Esophagus squamous epithelium (tissue), 5 donors: ENCODE measurements at regions of chr1 and their contacts with region 1.

Region 1: DNA sequence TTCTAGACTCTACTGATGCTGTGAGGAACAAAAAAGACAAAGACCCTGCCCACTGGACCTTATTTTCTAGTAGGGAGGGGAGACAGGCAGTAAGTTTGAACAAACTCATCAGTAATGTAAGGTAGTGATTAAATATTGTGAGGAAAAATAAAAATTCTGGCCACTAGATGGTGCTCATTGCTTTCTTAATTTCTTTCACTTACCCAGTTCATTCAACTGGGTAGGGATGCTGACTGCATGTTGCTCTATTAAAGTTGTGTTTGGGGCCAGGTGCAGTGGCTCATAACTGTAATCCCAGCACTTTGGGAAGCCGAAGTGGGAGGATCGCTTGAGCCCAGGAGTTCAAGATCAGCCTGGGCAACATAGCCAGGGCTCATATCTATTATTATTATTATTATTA is 6.3 kb upstream of the KYAT3 start:
- DNase-seq: no peak
- H3K4me3 ChIP-seq: no peak overlapping the region
- H3K27ac ChIP-seq: no peak overlapping the region
- H3K4me1 ChIP-seq: peaks cover 0 to 14% (median 0%) of the 10 kb centered on the region in 3 donors
- H3K27me3 ChIP-seq: no peaks in the 10 kb centered on the region
- CTCF ChIP-seq: peak in 5 of 6 experiments; percentile 46 to 76 (median 52)
- POLR2A ChIP-seq: no peak

Region 2: GRCh38 chr1:89358287-89358893 is 359.7 kb after region 1 on chr1:
- intact Hi-C with region 1: loop called (anchors 5 kb)
- DNase-seq: peak; percentile 2
- H3K4me3 ChIP-seq: no peak overlapping the region
- H3K27ac ChIP-seq: no peak overlapping the region
- H3K4me1 ChIP-seq: peaks cover 0 to 37% (median 12%) of the 10 kb centered on the region in 3 donors
- H3K27me3 ChIP-seq: no peaks in the 10 kb centered on the region
- CTCF ChIP-seq: peak; percentile 70 to 87 (median 83)
- POLR2A ChIP-seq: no peak

Region 3: DNA sequence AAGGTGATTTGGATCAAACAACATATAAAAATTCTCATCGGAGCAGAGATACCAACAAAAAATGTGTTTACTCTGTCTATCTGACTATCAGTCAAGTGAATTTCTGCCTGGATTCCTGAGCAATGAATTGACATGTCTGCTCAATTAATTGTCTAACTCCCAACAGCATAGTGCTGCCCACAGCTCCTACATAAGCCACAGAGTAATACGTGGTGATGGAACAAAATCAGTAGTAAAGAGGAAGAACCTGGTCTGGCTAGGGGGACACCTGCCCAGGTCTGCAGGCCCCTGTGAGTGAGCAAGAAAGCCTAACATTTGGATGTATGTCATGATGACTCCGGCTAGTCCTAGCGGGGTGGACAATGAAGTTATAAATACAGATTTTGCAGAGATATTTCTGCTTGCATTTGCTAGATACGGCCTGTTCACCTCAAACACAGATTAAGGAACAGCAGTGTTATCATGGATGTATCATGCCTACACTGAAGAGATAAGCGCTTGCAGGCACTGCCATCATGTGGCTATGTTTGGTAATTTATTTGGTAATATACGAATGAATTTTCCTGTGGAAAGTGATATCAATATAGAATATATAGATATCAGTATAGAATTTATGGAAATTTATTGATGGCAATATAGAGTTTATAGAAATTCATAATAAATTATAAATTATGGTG is 456.3 kb after region 1 on chr1:
- intact Hi-C with region 1: loop called (anchors 5 kb)
- DNase-seq: no peak
- H3K4me3 ChIP-seq: no peak overlapping the region
- H3K27ac ChIP-seq: peak overlapping the region in 3 of 4 donors; percentile 85 to 90 (median 88)
- H3K4me1 ChIP-seq: peaks cover 6 to 43% (median 7%) of the 10 kb centered on the region in 3 donors
- H3K27me3 ChIP-seq: no peaks in the 10 kb centered on the region
- CTCF ChIP-seq: peak; percentile 19 to 84 (median 76)
- POLR2A ChIP-seq: no peak